ENCODE measurements at regions of chr4 and their contacts with region 1.

Region 1: GRCh38 chr4:121227341-121227792 is 63.2 kb upstream of the TNIP3 start:
- DNase-seq: no peak
- H3K4me3 Mint-ChIP-seq: peak overlapping the region; percentile 61
- H3K27ac Mint-ChIP-seq: peak overlapping the region; percentile 77
- H3K4me1 Mint-ChIP-seq: peaks cover 56% of the 10 kb centered on the region
- H3K27me3 Mint-ChIP-seq: no peaks in the 10 kb centered on the region

Region 2: DNA sequence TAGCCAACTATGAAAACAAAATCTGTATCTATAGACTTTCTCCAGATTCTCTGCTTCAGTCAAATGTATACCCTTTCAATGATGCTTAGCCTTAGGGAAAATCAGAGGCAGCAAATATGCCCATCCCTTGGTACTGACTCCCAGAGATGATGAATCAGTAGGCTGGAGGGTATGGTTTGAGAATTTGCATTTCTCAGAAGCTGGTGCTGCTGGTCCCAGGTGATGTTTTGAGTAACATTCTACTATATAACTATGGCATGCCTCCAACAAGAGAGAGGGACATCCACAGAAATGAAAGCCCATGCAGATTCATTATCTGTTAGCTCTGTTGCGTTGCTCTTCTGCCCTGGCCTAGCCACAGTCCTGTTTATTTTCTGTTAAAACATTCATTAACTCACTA is 76.9 kb before region 1 on chr4:
- CTCF ChIA-PET with region 1: no interaction called
- intact Hi-C with region 1: loop called (anchors 1 kb)
- DNase-seq: peak; percentile 45
- H3K4me3 Mint-ChIP-seq: no peak overlapping the region
- H3K27ac Mint-ChIP-seq: no peak overlapping the region
- H3K4me1 Mint-ChIP-seq: peaks cover 62% of the 10 kb centered on the region
- H3K27me3 Mint-ChIP-seq: no peaks in the 10 kb centered on the region

Region 3: GRCh38 chr4:121182296-121182695 is 45.1 kb before region 1 on chr4:
- CTCF ChIA-PET with region 1: interaction called, 4 read pairs
- intact Hi-C with region 1: loop called (anchors 1 kb)
- DNase-seq: peak; percentile 30
- H3K4me3 Mint-ChIP-seq: peak overlapping the region; percentile 71
- H3K27ac Mint-ChIP-seq: peak overlapping the region; percentile 91
- H3K4me1 Mint-ChIP-seq: peaks cover 60% of the 10 kb centered on the region
- H3K27me3 Mint-ChIP-seq: no peaks in the 10 kb centered on the region

Region 4: DNA sequence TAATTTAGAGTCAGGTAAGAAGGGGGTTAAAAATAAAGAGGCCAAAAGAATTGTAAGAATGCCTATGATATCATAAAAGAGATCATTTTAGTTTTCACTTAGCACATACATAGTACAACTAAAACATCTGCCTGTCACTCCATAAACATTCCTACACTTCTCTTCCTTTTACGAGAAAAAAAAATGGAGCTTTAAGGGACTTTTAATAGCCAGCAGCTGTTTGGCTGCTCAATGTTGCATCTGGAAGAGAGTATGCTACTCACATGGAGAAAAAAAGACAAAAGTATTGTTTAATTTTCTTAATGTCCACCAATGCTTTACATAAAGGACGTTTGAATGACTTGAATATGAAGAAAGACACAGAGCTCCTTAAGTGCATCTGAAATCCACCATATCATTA is 14.6 kb before region 1 on chr4:
- CTCF ChIA-PET with region 1: no interaction called
- intact Hi-C with region 1: no loop called
- DNase-seq: no peak
- H3K4me3 Mint-ChIP-seq: no peak overlapping the region
- H3K27ac Mint-ChIP-seq: no peak overlapping the region
- H3K4me1 Mint-ChIP-seq: peaks cover 20% of the 10 kb centered on the region
- H3K27me3 Mint-ChIP-seq: no peaks in the 10 kb centered on the region

Region 5: DNA sequence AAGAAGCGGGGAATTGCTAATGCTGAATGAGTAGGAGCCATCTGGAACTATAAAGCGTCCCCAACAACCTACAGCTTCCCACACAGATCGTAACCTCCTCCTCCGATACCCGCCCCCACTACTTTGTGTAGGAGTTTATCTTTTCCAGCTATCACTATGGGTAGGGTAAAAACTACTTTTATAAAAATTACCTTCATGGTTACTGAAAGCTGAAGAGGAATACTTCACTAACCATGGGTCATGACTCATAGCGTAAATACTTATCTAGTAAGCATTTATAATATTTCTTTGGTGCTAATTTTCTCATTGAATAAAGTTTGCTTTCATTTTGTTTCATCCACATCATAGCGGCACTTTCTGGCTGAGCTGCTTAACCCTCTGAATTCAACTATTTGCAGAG is 16.1 kb after region 1 on chr4:
- CTCF ChIA-PET with region 1: interaction called, 7 read pairs
- intact Hi-C with region 1: loop called (anchors 1 kb)
- DNase-seq: peak; percentile 46
- H3K4me3 Mint-ChIP-seq: peak overlapping the region; percentile 19
- H3K27ac Mint-ChIP-seq: no peak overlapping the region
- H3K4me1 Mint-ChIP-seq: peaks cover 26% of the 10 kb centered on the region
- H3K27me3 Mint-ChIP-seq: no peaks in the 10 kb centered on the region

Region 6: GRCh38 chr4:121800961-121801714 is 573.8 kb after region 1 on chr4 and contains the start of gene EXOSC9:
- CTCF ChIA-PET with region 1: no interaction called
- intact Hi-C with region 1: loop called (anchors 10 kb)
- DNase-seq: peak; percentile 95
- H3K4me3 Mint-ChIP-seq: peak within 1 kb of the TSS; percentile 89
- H3K27ac Mint-ChIP-seq: peak within 1 kb of the TSS; percentile 98
- H3K4me1 Mint-ChIP-seq: peaks cover 46% of the 10 kb centered on the region
- H3K27me3 Mint-ChIP-seq: no peaks in the 10 kb centered on the region
- total RNA-seq, gene EXOSC9: 57.7 to 58.7 TPM

Measured in activated naive CD4-positive, alpha-beta T cell treated with anti-CD3 and anti-CD28 coated beads for 36 hours (primary cell).